Activated CD4-positive, alpha-beta T cell treated with anti-CD3 and anti-CD28 coated beads, Interleukin-2, amount 10 ng/mL, durations not matched to agents 24 days and 14 days (primary cell): ENCODE measurements at regions of chr3 and their contacts with region 1.

Region 1: GRCh38 chr3:194333212-194333980 is 17.7 kb downstream of the CPN2 start:
- DNase-seq: peak; percentile 98
- H3K4me3 Mint-ChIP-seq: peak overlapping the region; percentile 80
- H3K27ac Mint-ChIP-seq: no peak overlapping the region
- H3K4me1 Mint-ChIP-seq: peaks cover 11% of the 10 kb centered on the region
- H3K27me3 Mint-ChIP-seq: peaks cover 30% of the 10 kb centered on the region

Region 2: GRCh38 chr3:193987186-193987585 is 346.2 kb before region 1 on chr3:
- intact Hi-C with region 1: no loop called
- DNase-seq: no peak
- H3K4me3 Mint-ChIP-seq: no peak overlapping the region
- H3K27ac Mint-ChIP-seq: no peak overlapping the region
- H3K4me1 Mint-ChIP-seq: no peaks in the 10 kb centered on the region
- H3K27me3 Mint-ChIP-seq: peaks cover 46% of the 10 kb centered on the region

Region 3: DNA sequence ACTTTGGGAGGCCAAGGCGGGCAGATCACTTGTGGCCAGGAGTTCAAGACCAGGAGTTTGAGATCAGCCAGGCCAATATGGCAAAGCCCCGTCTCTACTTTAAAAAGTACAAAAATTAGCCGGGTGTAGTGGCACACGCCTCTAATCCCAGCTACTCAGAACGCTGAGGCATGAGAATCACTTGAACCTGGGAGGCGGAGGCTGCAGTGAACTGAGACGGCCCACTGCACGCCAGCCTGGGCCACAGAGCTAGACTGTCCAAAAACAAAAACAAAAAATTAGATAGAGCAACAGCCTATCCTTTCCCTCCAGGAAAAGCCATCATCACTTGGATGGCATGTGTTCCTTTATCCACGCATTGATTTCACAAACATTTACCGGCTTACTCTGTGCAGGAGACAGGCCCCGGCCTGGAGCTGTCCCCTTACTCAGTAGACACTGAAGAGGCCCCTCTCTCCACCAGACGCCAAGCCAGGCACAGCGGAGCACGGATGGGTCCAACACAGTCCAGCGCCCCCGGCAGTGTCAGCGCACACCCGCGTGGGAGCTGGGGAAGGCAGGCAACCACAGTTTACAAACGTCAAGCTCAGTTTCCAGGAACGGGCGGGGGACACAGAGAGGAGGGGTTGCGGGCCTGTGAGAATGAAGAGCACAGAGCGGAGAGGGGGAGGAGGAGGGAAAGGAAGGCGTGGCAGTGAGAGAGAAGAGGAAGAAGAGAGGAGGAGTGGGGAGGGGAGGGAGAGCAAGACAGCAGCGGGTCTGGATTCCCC is 62.6 kb after region 1 on chr3:
- intact Hi-C with region 1: loop called (anchors 2 kb)
- DNase-seq: peak; percentile 92
- H3K4me3 Mint-ChIP-seq: peak overlapping the region; percentile 82
- H3K27ac Mint-ChIP-seq: peak overlapping the region; percentile 78
- H3K4me1 Mint-ChIP-seq: peaks cover 47% of the 10 kb centered on the region
- H3K27me3 Mint-ChIP-seq: peaks cover 23% of the 10 kb centered on the region

Region 4: DNA sequence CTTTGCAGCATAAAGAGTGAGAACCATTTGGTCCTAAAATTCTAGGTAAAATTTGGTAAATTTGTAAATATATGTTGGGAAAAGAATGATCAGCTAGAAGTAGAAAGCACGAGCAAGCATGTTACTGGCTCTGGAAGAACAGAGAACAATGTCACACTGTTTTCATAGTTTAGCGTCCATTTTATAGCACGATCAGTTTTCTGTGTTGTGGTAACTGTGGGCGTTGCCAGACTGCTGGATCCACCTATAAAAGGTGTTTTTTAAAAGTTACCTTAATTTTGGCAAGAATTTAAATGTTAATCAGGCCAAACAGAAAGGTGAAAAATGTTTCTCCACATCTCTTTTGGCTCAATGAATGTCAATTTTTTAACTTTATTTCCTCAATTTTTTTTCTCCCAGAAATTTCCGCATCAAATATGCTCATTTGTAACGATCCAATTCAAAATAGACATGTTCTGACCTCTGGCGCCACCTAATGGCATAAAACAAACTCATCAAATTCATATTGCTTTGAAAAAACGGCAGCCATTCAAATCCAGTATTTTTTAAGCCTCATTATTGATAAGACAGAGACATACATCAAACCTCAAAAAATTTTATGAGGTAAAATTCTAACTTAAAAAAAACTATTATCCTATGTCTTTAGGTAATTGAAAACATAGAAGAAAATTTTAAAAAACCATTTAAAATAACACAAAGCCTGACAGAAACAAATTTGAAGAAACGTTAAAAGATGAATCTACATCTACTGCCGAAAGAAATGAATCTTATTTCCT is 71.2 kb after region 1 on chr3:
- intact Hi-C with region 1: loop called (anchors 1 kb)
- DNase-seq: peak; percentile 85
- H3K4me3 Mint-ChIP-seq: no peak overlapping the region
- H3K27ac Mint-ChIP-seq: no peak overlapping the region
- H3K4me1 Mint-ChIP-seq: peaks cover 13% of the 10 kb centered on the region
- H3K27me3 Mint-ChIP-seq: no peaks in the 10 kb centered on the region

Region 5: DNA sequence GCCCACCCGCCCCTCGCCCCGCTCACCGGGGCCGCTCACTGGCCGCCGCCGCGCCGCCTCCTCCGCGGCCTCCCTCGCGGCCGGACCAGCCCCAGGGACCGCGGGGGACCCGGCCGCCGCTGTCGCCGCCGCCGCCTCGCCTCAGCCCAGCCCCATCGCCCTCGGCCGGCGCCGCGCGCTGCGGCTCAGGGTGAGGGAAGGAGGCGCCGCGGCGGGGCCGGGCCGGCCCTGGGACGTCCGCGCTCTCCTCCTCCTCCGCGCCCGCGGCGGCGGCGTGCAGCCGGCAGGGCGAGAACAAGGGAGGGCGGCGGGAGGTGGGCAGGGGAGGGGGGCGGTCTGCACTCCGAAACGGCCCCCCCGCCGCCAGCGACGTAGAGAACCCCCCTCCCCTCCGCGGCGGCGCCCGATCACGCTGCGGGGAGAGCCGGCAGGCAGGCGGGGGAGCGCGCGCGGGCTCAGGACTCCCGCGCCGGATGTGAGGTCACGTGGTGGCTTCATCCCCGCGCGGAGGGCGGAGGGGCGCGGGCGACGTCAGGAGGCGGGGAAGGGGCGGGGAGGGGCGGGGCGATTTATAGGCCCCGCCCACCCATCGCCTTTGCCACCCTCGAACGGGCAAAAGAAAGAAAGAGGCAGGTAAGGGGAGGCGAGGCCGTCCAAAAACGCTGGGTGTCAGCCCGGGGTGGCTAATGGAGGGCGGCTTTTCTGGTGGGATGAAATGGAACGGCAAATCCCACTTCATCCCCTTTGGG is 153.3 kb after region 1 on chr3 and contains the start of gene ATP13A3:
- intact Hi-C with region 1: loop called (anchors 10 kb)
- DNase-seq: peak; percentile 96
- H3K4me3 Mint-ChIP-seq: peak within 1 kb of the TSS; percentile 94
- H3K27ac Mint-ChIP-seq: peak within 1 kb of the TSS; percentile 97
- H3K4me1 Mint-ChIP-seq: peaks cover 53% of the 10 kb centered on the region
- H3K27me3 Mint-ChIP-seq: no peaks in the 10 kb centered on the region
- total RNA-seq, gene ATP13A3: 181 and 193 TPM in 2 replicates

Region 6: DNA sequence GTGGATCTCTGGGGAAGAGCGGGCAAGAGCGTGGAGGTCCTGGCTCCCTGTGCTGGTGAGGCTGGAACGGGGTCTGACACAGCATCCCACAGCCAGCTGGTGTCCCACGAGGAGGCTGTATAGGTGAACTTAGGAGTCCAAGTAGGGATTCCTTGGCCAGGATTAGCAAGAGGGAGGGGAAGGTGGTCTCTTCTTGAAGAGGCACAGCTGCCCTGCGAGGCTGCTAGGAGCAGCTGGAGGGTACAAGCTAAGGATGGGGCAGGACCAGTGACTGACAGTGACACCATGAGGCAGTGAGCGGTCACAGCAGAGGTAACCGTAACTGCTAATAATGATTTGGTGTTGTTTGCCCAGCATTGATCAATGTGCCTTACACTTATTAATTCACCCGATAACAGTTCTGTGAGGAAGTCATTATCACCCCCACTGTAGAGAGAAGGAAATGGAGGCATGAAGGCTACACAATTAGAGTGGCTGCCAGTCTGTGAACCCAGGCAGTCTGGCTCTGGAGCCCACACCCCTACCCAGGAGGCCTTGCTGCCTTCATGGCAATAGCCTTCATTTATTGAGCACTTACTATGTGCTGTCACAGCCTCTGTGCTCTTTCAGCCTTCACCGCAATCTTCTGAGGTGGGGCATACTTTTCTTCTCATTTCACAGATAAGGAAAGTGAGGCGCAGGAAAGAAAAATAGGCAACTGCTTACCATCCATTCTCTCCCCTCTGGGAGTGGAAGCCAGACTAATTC is 240.5 kb after region 1 on chr3:
- intact Hi-C with region 1: loop called (anchors 2 kb)
- DNase-seq: peak; percentile 79
- H3K4me3 Mint-ChIP-seq: no peak overlapping the region
- H3K27ac Mint-ChIP-seq: no peak overlapping the region
- H3K4me1 Mint-ChIP-seq: peaks cover 18% of the 10 kb centered on the region
- H3K27me3 Mint-ChIP-seq: peaks cover 26% of the 10 kb centered on the region

Region 7: DNA sequence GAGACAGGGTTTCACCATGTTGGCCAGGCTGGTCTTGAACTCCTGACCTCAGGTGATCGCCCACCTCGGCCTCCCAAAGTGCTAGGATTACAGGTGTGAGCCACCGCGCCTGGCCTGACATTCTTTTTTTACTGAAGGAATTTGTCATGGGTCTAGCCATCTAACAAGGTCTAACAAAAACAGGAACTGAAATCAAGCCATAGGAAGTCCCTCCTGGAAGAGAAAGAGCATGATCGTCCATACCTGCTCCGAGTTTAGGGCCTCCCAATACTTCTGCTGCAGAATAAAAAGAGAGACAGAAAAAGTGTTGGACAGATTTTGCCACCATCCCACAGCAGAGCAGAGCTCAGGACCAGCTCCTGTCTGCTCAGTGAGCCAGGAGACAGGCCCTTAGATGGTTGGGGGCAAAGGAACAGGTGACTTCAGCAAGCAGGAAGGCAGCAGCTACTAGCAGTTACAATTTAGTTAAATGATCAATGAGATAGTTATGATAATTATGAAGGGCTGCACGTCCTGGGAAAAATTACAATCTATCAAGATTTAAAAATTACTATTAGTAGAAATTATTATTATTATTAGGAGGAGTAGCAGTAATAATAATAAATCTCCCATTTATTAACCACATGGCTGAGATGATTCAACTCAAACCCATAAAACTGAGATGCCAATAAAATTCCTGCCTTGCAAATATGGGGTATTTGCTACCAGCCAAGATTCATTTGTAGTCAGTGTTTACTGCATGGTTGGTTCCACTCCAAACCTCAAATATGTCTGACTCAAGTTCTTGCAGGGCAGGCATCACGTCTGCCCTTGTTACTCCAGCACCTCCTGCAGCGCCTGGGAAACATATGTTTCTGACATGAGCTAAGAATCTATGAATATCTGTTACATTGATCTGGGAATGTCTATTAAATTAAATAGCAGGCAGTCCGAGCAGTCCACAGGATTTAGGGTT is 259.7 kb after region 1 on chr3:
- intact Hi-C with region 1: loop called (anchors 2 kb)
- DNase-seq: no peak
- H3K4me3 Mint-ChIP-seq: no peak overlapping the region
- H3K27ac Mint-ChIP-seq: no peak overlapping the region
- H3K4me1 Mint-ChIP-seq: peaks cover 6% of the 10 kb centered on the region
- H3K27me3 Mint-ChIP-seq: no peaks in the 10 kb centered on the region